A673 (cell line): ENCODE measurements at regions of chrX and their contacts with region 1.

Region 1: DNA sequence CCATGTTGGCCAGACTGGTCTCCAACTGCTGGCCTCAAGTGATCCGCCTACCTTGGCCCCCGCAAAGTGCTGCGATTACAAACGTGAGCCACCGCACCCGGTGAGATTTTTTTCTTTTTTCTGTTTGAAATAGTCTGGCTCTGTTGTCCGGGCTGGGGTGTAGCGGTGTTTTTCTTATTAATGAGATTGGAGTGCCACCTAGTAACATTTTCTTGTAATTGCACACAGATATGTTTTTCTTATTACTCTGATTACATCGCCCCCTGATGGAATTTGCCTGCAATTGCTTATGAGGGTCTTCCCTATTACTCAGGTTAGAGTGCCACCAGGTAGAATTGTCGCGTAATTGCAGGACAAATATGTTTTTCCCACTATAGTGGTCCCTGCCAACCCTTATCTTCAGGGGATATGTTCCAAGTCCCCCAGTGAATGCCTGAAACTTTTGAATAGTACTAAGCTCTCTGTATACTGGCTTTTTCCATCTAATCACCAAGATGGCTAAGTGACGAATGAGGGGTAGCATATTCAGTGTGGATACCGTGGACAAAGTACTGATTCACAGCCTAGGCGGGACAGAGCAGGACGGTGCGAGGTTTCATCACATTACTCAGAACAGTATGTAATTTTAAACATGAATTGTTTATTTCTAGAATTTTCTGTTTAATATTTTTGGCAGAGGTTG is 8.6 kb upstream of the PDHA1 start:
- DNase-seq: peak; percentile 71
- H3K4me3 ChIP-seq: no peak overlapping the region
- H3K27ac ChIP-seq: no peak overlapping the region
- H3K4me1 ChIP-seq: peaks cover 16% of the 10 kb centered on the region
- H3K27me3 ChIP-seq: no peaks in the 10 kb centered on the region
- CTCF ChIP-seq: peak; percentile 62

Region 2: DNA sequence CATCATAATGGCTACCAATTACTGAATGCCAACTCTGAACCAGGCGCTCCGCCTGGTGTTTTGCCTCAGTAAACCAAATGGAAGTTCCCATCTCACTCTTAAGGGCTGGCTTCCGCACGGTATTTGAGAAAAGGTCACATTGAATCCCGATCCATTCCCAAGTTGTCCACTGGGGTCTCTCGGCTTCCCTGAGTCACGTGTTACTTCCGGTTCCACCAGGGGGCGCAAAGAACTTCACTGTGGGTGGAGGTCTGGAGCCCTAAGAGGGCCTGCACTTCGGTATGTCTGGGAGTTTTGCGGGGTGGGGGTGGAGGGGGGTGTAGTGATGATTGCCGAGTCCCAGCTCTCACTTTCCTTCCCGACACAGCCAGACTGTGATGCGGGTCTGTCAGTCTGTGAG is 1973.5 kb before region 1 on chrX:
- CTCF ChIA-PET with region 1: no interaction called
- POLR2A ChIA-PET with region 1: no interaction called
- intact Hi-C with region 1: no loop called
- DNase-seq: peak; percentile 57
- H3K4me3 ChIP-seq: no peak overlapping the region
- H3K27ac ChIP-seq: no peak overlapping the region
- H3K4me1 ChIP-seq: no peaks in the 10 kb centered on the region
- H3K27me3 ChIP-seq: peaks cover 8% of the 10 kb centered on the region
- CTCF ChIP-seq: peak; percentile 63

Region 3: DNA sequence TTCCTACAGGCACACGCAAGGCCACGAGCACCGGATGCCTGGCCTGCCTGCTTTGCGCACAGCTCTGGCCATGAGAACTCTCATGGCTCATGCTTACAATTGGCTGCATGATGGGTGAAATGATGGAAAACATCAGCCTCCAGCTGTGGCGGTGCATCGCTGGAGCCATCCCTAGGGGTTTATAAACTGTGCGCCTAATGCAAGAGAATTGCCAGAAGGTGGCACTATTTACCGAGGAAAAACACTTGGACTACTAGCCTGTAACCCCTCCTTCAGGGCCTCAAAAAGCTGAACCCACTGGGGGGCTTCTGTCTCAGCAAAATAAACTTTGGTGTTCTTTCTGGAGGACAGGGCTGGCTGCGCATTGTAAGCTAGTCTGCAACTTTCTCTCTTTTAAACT is 403.1 kb before region 1 on chrX:
- CTCF ChIA-PET with region 1: interaction called, 46 read pairs
- POLR2A ChIA-PET with region 1: no interaction called
- intact Hi-C with region 1: loop called (anchors 1 kb)
- DNase-seq: peak; percentile 90
- H3K4me3 ChIP-seq: no peak overlapping the region
- H3K27ac ChIP-seq: no peak overlapping the region
- H3K4me1 ChIP-seq: peaks cover 15% of the 10 kb centered on the region
- H3K27me3 ChIP-seq: no peaks in the 10 kb centered on the region
- CTCF ChIP-seq: peak; percentile 81

Region 4: GRCh38 chrX:19040373-19040772 is 294.7 kb before region 1 on chrX:
- CTCF ChIA-PET with region 1: interaction called, 18 read pairs
- POLR2A ChIA-PET with region 1: no interaction called
- intact Hi-C with region 1: loop called (anchors 5 kb)
- DNase-seq: peak; percentile 23
- H3K4me3 ChIP-seq: no peak overlapping the region
- H3K27ac ChIP-seq: no peak overlapping the region
- H3K4me1 ChIP-seq: peaks cover 19% of the 10 kb centered on the region
- H3K27me3 ChIP-seq: no peaks in the 10 kb centered on the region
- CTCF ChIP-seq: peak; percentile 62; the same call in 1 of the 2 replicates

Region 5: GRCh38 chrX:19057856-19058255 is 277.2 kb before region 1 on chrX:
- CTCF ChIA-PET with region 1: no interaction called
- POLR2A ChIA-PET with region 1: no interaction called
- intact Hi-C with region 1: no loop called
- DNase-seq: no peak
- H3K4me3 ChIP-seq: no peak overlapping the region
- H3K27ac ChIP-seq: no peak overlapping the region
- H3K4me1 ChIP-seq: no peaks in the 10 kb centered on the region
- H3K27me3 ChIP-seq: no peaks in the 10 kb centered on the region
- CTCF ChIP-seq: no peak

Region 6: GRCh38 chrX:19121898-19122640 is 213.0 kb before region 1 on chrX and contains the start of gene ADGRG2:
- CTCF ChIA-PET with region 1: interaction called, 3 read pairs
- POLR2A ChIA-PET with region 1: no interaction called
- intact Hi-C with region 1: loop called (anchors 2 kb)
- DNase-seq: peak; percentile 86
- H3K4me3 ChIP-seq: peak within 1 kb of the TSS; percentile 75
- H3K27ac ChIP-seq: peak within 1 kb of the TSS; percentile 96
- H3K4me1 ChIP-seq: peaks cover 38% of the 10 kb centered on the region
- H3K27me3 ChIP-seq: no peaks in the 10 kb centered on the region
- CTCF ChIP-seq: peak; percentile 42
- total RNA-seq, gene ADGRG2: 61.3 and 73.6 TPM in 2 replicates

Region 7: DNA sequence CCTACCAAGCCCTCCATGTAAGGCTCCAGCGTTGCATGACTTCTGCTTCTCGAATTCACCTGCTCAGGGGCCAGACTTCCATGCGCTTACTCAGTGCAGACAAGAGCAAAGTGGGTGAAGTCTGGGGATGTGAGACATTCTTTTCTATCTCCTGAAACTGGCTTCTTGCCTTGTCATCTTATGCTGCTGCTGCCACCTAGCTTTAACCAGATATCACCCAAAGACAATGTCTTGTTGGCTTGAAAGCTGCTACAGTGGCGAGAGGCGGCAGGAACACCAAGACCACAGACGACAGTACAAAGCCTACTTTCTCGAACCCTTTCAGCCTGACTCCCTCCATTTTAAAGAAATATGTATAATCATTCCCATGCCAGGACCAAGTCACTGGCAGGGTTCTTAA is 109.2 kb before region 1 on chrX:
- CTCF ChIA-PET with region 1: no interaction called
- POLR2A ChIA-PET with region 1: no interaction called
- intact Hi-C with region 1: loop called (anchors 5 kb)
- DNase-seq: peak; percentile 88
- H3K4me3 ChIP-seq: no peak overlapping the region
- H3K27ac ChIP-seq: peak overlapping the region; percentile 67
- H3K4me1 ChIP-seq: peaks cover 19% of the 10 kb centered on the region
- H3K27me3 ChIP-seq: no peaks in the 10 kb centered on the region
- CTCF ChIP-seq: peak; percentile 74

Region 8: GRCh38 chrX:19389227-19389845 is 54.2 kb after region 1 on chrX:
- CTCF ChIA-PET with region 1: no interaction called
- POLR2A ChIA-PET with region 1: no interaction called
- intact Hi-C with region 1: no loop called
- DNase-seq: peak; percentile 51
- H3K4me3 ChIP-seq: no peak overlapping the region
- H3K27ac ChIP-seq: no peak overlapping the region
- H3K4me1 ChIP-seq: peaks cover 9% of the 10 kb centered on the region
- H3K27me3 ChIP-seq: peaks cover 5% of the 10 kb centered on the region
- CTCF ChIP-seq: no peak

Region 9: GRCh38 chrX:19462231-19462630 is 127.1 kb after region 1 on chrX:
- CTCF ChIA-PET with region 1: no interaction called
- POLR2A ChIA-PET with region 1: no interaction called
- intact Hi-C with region 1: no loop called
- DNase-seq: no peak
- H3K4me3 ChIP-seq: no peak overlapping the region
- H3K27ac ChIP-seq: no peak overlapping the region
- H3K4me1 ChIP-seq: no peaks in the 10 kb centered on the region
- H3K27me3 ChIP-seq: peaks cover 3% of the 10 kb centered on the region
- CTCF ChIP-seq: no peak